Mammary epithelial cell (primary cell): ENCODE measurements at regions of chr2 and their contacts with region 1.

Region 1: GRCh38 chr2:27356382-27357181 is at the start of gene GTF3C2:
- DNase-seq: peak; percentile 98
- H3K4me3 ChIP-seq: peak within 1 kb of the TSS; percentile 74 to 92 (median 89)
- H3K27ac ChIP-seq: peak within 1 kb of the TSS; percentile 88
- H3K4me1 ChIP-seq: peaks cover 16% of the 10 kb centered on the region
- H3K27me3 ChIP-seq: no peaks in the 10 kb centered on the region
- CTCF ChIP-seq: no peak
- total RNA-seq, gene GTF3C2: 26.7 to 55.5 TPM

Region 2: GRCh38 chr2:27370026-27370815 is 13.6 kb after region 1 on chr2 and contains the starts of genes EIF2B4 and SNX17:
- CTCF ChIA-PET with region 1: interaction called, 6 read pairs
- dilution Hi-C with region 1: no loop called
- in situ Hi-C with region 1: no loop called
- intact Hi-C with region 1: loop called (anchors 1 kb)
- DNase-seq: peak; percentile 99
- H3K4me3 ChIP-seq: peak within 1 kb of the TSS; percentile 88 to 96 (median 94)
- H3K27ac ChIP-seq: peak within 1 kb of the TSS; percentile 67
- H3K4me1 ChIP-seq: peaks cover 18% of the 10 kb centered on the region
- H3K27me3 ChIP-seq: no peaks in the 10 kb centered on the region
- CTCF ChIP-seq: peak; percentile 55 to 97
- total RNA-seq, gene EIF2B4: 19.8 to 42.3 TPM
- total RNA-seq, gene SNX17: 86.0 to 87.5 TPM